Mammary epithelial cell (primary cell): ENCODE measurements at regions of chr15 and their contacts with region 1.

Region 1: GRCh38 chr15:99565299-99566156 is at the start of gene MEF2A:
- DNase-seq: peak; percentile 92
- H3K4me3 ChIP-seq: peak within 1 kb of the TSS; percentile 79 to 89 (median 80)
- H3K27ac ChIP-seq: peak within 1 kb of the TSS; percentile 90
- H3K4me1 ChIP-seq: peaks cover 8% of the 10 kb centered on the region
- H3K27me3 ChIP-seq: no peaks in the 10 kb centered on the region
- CTCF ChIP-seq: no peak
- total RNA-seq, gene MEF2A: 39.8 to 46.0 TPM

Region 2: DNA sequence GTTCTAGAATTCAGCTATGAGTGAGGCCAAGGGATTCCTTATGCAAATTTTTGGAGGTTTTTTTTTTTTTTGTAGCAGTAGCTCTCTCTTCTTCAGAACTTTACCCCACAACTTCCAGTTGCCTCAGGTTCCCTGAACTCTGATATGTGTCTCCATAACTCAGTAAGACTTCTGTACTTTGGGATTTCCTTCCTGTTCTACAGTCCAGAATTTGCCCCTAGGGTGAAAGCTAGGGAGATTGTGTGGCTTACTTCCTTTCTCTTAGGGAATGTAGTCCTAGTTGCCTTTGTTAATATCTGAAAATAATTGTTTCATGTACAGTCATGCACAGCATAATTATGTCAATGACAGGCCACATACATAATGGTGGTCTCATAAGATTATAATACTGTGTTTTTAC is 283.4 kb before region 1 on chr15:
- CTCF ChIA-PET with region 1: no interaction called
- dilution Hi-C with region 1: no loop called
- in situ Hi-C with region 1: no loop called
- intact Hi-C with region 1: loop called (anchors 5 kb)
- DNase-seq: no peak
- H3K4me3 ChIP-seq: no peak overlapping the region
- H3K27ac ChIP-seq: no peak overlapping the region
- H3K4me1 ChIP-seq: peaks cover 8% of the 10 kb centered on the region
- H3K27me3 ChIP-seq: no peaks in the 10 kb centered on the region
- CTCF ChIP-seq: no peak

Region 3: GRCh38 chr15:99424978-99425656 is 140.4 kb before region 1 on chr15:
- CTCF ChIA-PET with region 1: no interaction called
- dilution Hi-C with region 1: no loop called
- in situ Hi-C with region 1: no loop called
- intact Hi-C with region 1: loop called (anchors 5 kb)
- DNase-seq: peak; percentile 95
- H3K4me3 ChIP-seq: no peak overlapping the region
- H3K27ac ChIP-seq: peak overlapping the region; percentile 70
- H3K4me1 ChIP-seq: peaks cover 18% of the 10 kb centered on the region
- H3K27me3 ChIP-seq: no peaks in the 10 kb centered on the region
- CTCF ChIP-seq: no peak

Region 4: GRCh38 chr15:99466701-99467337 is 98.7 kb before region 1 on chr15:
- CTCF ChIA-PET with region 1: no interaction called
- dilution Hi-C with region 1: no loop called
- in situ Hi-C with region 1: no loop called
- intact Hi-C with region 1: no loop called
- DNase-seq: no peak
- H3K4me3 ChIP-seq: no peak overlapping the region
- H3K27ac ChIP-seq: no peak overlapping the region
- H3K4me1 ChIP-seq: no peaks in the 10 kb centered on the region
- H3K27me3 ChIP-seq: no peaks in the 10 kb centered on the region
- CTCF ChIP-seq: no peak

Region 5: GRCh38 chr15:99550077-99550476 is 15.5 kb before region 1 on chr15:
- CTCF ChIA-PET with region 1: no interaction called
- dilution Hi-C with region 1: no loop called
- in situ Hi-C with region 1: no loop called
- intact Hi-C with region 1: no loop called
- DNase-seq: no peak
- H3K4me3 ChIP-seq: no peak overlapping the region
- H3K27ac ChIP-seq: no peak overlapping the region
- H3K4me1 ChIP-seq: no peaks in the 10 kb centered on the region
- H3K27me3 ChIP-seq: peaks cover 1% of the 10 kb centered on the region
- CTCF ChIP-seq: no peak

Region 6: GRCh38 chr15:99614749-99615288 is 49.3 kb after region 1 on chr15:
- CTCF ChIA-PET with region 1: no interaction called
- dilution Hi-C with region 1: no loop called
- in situ Hi-C with region 1: no loop called
- intact Hi-C with region 1: loop called (anchors 5 kb)
- DNase-seq: no peak
- H3K4me3 ChIP-seq: no peak overlapping the region
- H3K27ac ChIP-seq: no peak overlapping the region
- H3K4me1 ChIP-seq: peaks cover 23% of the 10 kb centered on the region
- H3K27me3 ChIP-seq: no peaks in the 10 kb centered on the region
- CTCF ChIP-seq: no peak

Region 7: GRCh38 chr15:99704444-99704838 is 138.9 kb after region 1 on chr15:
- CTCF ChIA-PET with region 1: interaction called, 3 read pairs
- dilution Hi-C with region 1: no loop called
- in situ Hi-C with region 1: no loop called
- intact Hi-C with region 1: loop called (anchors 1 kb)
- DNase-seq: peak; percentile 83
- H3K4me3 ChIP-seq: no peak overlapping the region
- H3K27ac ChIP-seq: no peak overlapping the region
- H3K4me1 ChIP-seq: peaks cover 39% of the 10 kb centered on the region
- H3K27me3 ChIP-seq: no peaks in the 10 kb centered on the region
- CTCF ChIP-seq: peak; percentile 78 to 85